RWPE1 (cell line): ENCODE measurements at regions of chr20 and their contacts with region 1.

Region 1: DNA sequence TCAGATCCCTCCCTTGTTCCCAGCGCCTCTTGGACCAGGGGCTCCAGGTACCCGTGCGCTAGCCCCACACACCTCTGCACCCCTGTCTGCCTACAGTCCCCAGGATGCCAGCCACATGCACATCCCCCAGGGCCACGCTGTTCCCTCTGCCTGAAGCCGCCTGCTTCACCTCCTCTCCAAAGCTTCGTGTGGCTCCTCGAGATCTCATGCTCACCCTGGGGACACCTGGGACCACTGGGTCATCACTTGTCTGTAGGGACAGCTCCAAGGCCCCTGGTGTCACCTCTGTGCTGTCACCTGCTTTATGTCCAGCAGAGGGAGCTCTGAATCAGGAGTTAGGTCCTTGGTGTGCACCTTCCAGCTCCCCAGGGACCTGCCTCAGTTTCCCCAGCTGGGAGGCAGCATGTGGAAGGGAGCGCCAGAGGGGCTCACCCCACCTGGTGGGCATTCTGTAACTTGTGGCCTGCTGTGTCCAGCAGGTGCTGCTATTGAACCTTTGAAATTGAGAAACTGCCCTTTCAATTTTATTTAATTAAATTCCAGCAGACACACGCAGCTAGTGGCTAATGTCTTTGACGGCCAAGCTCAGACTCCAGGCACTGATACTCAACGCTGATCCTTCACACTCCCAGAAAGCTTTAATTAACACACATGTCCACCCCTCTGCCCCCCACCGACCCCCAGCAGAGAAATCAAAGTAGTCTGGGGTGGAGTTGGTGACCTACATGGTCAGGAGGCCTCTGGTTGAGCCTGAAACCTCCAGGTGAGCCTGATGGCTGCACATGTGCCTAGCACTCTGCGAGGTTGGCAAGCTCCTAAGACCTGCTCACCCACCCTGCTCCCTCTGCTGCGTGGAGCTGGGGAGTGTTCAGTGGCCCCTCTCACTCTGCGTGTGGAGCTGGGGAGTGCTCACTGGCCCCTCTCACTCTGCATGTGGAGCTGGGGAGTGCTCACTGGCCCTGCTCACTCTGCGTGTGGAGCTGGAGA is 7.6 kb upstream of the YTHDF1 start:
- DNase-seq: peak; percentile 48
- H3K27ac ChIP-seq: peak overlapping the region; percentile 59
- CTCF ChIP-seq: peak; percentile 97

Region 2: GRCh38 chr20:63191400-63191799 is 32.1 kb before region 1 on chr20:
- CTCF ChIA-PET with region 1: interaction called, 13 read pairs
- POLR2A ChIA-PET with region 1: interaction called, 4 read pairs
- DNase-seq: peak; percentile 96
- H3K27ac ChIP-seq: peak overlapping the region; percentile 42
- CTCF ChIP-seq: no peak

Region 3: GRCh38 chr20:63238514-63239125 is 15.1 kb after region 1 on chr20:
- CTCF ChIA-PET with region 1: interaction called, 111 read pairs
- POLR2A ChIA-PET with region 1: no interaction called
- DNase-seq: no peak
- H3K27ac ChIP-seq: no peak overlapping the region
- CTCF ChIP-seq: no peak

Region 4: GRCh38 chr20:63265891-63266515 is 42.5 kb after region 1 on chr20:
- CTCF ChIA-PET with region 1: interaction called, 11 read pairs
- POLR2A ChIA-PET with region 1: no interaction called
- DNase-seq: no peak
- H3K27ac ChIP-seq: no peak overlapping the region
- CTCF ChIP-seq: no peak

Region 5: GRCh38 chr20:63290677-63291472 is 67.4 kb after region 1 on chr20:
- CTCF ChIA-PET with region 1: interaction called, 20 read pairs
- POLR2A ChIA-PET with region 1: no interaction called
- DNase-seq: peak; percentile 80
- H3K27ac ChIP-seq: no peak overlapping the region
- CTCF ChIP-seq: peak; percentile 90